ENCODE measurements at regions of chr3 and their contacts with region 1.

Region 1: GRCh38 chr3:14461748-14462324 is 59.4 kb downstream of the SLC6A6 start:
- DNase-seq: peak; percentile 62 to 63 (median 63)
- H3K4me3 ChIP-seq: no peak overlapping the region
- H3K27ac ChIP-seq: no peak overlapping the region
- H3K4me1 ChIP-seq: no peaks in the 10 kb centered on the region
- H3K27me3 ChIP-seq: no peaks in the 10 kb centered on the region

Region 2: GRCh38 chr3:14261229-14261628 is 200.6 kb before region 1 on chr3:
- CTCF ChIA-PET with region 1: interaction called, 123 read pairs
- POLR2A ChIA-PET with region 1: no interaction called
- DNase-seq: peak; percentile 59 to 68 (median 65)
- H3K4me3 ChIP-seq: no peak overlapping the region
- H3K27ac ChIP-seq: no peak overlapping the region
- H3K4me1 ChIP-seq: peaks cover 0 to 4% (median 2%) of the 10 kb centered on the region in 4 experiments
- H3K27me3 ChIP-seq: peaks cover 0 to 2% (median 0%) of the 10 kb centered on the region in 5 experiments

Region 3: DNA sequence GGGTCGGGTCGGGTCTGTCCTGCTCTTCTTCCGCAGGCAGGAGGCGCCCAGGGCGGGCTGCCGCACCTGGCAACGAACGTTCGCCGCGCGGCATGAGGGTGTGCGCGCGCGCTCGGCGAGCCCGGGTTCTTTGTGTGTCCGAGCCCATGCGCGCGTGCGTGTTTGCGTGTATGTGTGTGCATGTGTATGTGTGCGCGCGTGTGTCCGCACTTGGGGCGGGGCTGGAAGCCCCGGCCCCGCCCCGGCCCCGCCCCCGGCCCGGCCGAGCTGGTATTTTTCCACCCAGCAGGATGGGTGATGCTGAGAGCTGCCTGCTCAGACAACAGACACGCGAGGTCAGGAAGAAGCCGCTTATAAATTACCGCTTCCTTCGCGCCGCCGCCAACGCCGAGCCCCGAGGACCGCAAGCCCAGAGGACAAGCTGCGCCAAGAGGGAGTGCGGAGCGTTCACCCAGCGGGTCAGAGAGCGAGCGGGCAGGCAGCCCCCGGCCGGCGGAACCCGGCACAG is 59.5 kb before region 1 on chr3 and contains the start of gene SLC6A6:
- CTCF ChIA-PET with region 1: interaction called, 71 read pairs
- POLR2A ChIA-PET with region 1: no interaction called
- DNase-seq: peak; percentile 95 to 98 (median 97)
- H3K4me3 ChIP-seq: peak within 1 kb of the TSS; percentile 67 to 100 (median 89)
- H3K27ac ChIP-seq: peak within 1 kb of the TSS in 1 of 2 experiments; percentile 80
- H3K4me1 ChIP-seq: peaks cover 0 to 65% (median 46%) of the 10 kb centered on the region in 4 experiments
- H3K27me3 ChIP-seq: no peaks in the 10 kb centered on the region

Region 4: GRCh38 chr3:14426063-14426620 is 35.7 kb before region 1 on chr3:
- CTCF ChIA-PET with region 1: interaction called, 30 read pairs
- POLR2A ChIA-PET with region 1: interaction called, 4 read pairs
- DNase-seq: peak; percentile 41 to 79 (median 74)
- H3K4me3 ChIP-seq: peak overlapping the region in 2 of 7 experiments; percentile 4 to 8
- H3K27ac ChIP-seq: peak overlapping the region in 1 of 2 experiments; percentile 12
- H3K4me1 ChIP-seq: peaks cover 20 to 87% (median 83%) of the 10 kb centered on the region in 4 experiments
- H3K27me3 ChIP-seq: no peaks in the 10 kb centered on the region

Region 5: GRCh38 chr3:14431892-14432834 is 29.7 kb before region 1 on chr3:
- CTCF ChIA-PET with region 1: interaction called, 30 read pairs
- POLR2A ChIA-PET with region 1: interaction called, 4 read pairs
- DNase-seq: peak; percentile 97 to 99 (median 99)
- H3K4me3 ChIP-seq: peak overlapping the region in 5 of 7 experiments; percentile 16 to 62 (median 49)
- H3K27ac ChIP-seq: peak overlapping the region; percentile 90 to 94
- H3K4me1 ChIP-seq: peaks cover 22 to 97% (median 89%) of the 10 kb centered on the region in 4 experiments
- H3K27me3 ChIP-seq: no peaks in the 10 kb centered on the region

Region 6: DNA sequence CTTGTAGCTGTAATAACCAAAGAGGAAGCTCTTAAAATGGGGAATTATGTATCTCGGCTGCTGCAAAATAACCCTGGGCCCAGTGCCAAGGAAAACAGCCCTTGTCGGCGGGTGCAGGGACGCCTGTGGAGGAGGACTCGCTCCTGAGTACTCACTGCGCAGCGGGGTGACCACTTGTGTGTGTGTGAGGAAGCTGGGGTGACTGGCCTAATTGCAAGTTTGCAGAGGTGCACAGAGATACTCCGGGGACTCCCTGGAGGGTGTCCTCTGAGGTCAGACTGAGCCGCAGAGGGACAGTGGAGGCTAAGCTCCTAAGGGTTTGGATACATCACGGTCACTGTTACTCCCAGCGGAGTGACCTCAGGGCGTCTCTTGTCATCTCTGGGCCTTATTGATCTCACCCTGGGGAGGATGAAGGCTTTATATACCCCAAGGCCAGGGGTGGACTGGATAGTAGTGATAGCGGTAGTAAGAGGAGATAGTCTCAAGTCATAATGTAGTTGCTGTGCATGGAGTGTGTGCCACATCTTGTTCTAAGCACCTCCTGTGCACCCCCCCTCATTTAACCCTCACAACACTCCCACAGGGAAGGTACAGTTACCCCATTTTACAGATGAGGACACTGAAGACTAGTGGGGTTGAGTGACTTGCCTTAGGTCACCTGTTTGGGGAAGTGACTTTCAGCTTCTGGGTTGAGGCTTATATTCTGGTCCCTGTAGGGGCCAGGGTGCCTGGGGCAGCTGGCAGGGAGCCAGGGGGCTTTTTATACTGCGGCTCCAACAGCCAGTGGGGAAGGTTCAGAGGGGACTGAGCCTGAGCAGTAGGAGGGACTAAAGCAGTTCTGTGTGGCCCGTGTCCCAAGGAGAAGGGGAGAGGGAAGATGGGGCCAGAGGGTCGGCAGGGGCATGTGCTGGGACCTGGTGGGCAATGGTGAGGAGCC is 22.0 kb before region 1 on chr3:
- CTCF ChIA-PET with region 1: interaction called, 39 read pairs
- POLR2A ChIA-PET with region 1: interaction called, 3 read pairs
- DNase-seq: peak; percentile 70 to 92 (median 90)
- H3K4me3 ChIP-seq: peak overlapping the region in 4 of 7 experiments; percentile 19 to 61 (median 40)
- H3K27ac ChIP-seq: no peak overlapping the region
- H3K4me1 ChIP-seq: peaks cover 13 to 67% (median 54%) of the 10 kb centered on the region in 4 experiments
- H3K27me3 ChIP-seq: no peaks in the 10 kb centered on the region

Region 7: GRCh38 chr3:14623569-14624051 is 161.8 kb after region 1 on chr3:
- CTCF ChIA-PET with region 1: no interaction called
- POLR2A ChIA-PET with region 1: no interaction called
- DNase-seq: no peak
- H3K4me3 ChIP-seq: no peak overlapping the region
- H3K27ac ChIP-seq: no peak overlapping the region
- H3K4me1 ChIP-seq: no peaks in the 10 kb centered on the region
- H3K27me3 ChIP-seq: peaks cover 0 to 33% (median 15%) of the 10 kb centered on the region in 5 experiments

Measured in common myeloid progenitor, CD34-positive (primary cell).